Activated B cell treated with CpG ODN at 0.5 μM for 24 hours (primary cell): ENCODE measurements at regions of chr17 and their contacts with region 1.

Region 1: GRCh38 chr17:8248751-8249607 is at the start of gene PFAS:
- DNase-seq: peak; percentile 99
- ATAC-seq: peak; percentile 47
- H3K4me3 Mint-ChIP-seq: peak within 1 kb of the TSS; percentile 99
- H3K27ac Mint-ChIP-seq: peak within 1 kb of the TSS; percentile 99
- H3K4me1 Mint-ChIP-seq: peaks cover 43% of the 10 kb centered on the region
- H3K27me3 Mint-ChIP-seq: no peaks in the 10 kb centered on the region
- CTCF ChIP-seq: no peak
- total RNA-seq, gene PFAS: 121 and 126 TPM in 2 replicates

Region 2: DNA sequence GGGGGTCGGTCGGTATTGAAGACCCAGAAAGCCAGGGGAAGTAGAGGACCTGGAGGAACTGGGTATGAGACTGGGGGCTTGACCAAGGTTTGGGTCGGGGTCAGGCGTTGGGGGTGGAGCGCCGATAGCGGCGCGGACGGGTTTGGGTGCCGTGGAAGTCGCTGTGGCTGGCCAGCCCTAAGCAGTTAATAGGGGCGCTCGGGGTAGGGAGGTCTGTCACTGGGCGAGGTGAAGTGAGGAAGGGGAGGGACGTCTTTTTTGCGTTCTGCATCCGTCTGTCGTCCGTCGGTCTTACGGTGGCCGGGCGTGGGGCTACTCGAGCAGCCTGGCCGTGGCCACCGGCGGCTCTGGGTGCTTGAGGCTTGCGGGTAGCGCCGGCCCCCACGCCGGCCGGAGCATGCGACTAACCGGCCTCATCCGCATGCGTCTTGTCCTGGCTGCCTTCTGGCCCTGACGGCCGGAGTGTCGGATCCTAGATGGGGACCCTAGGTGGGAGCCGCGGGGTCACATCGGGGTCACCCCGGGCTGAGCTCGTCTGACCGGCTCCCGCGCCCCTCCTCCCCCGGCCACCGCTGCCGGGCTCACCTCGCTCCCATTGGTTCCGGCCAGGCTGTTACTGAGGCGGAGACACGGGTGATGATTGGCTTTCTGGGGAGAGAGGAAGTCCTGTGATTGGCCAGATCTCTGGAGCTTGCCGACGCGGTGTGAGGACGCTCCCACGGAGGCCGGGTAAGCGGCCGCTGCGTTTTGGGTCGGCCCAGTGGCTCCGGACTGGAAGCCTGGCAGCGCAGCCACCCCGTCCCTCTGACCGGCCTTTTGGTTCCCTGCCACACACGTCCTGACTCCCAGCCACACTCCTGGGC is 404.5 kb before region 1 on chr17:
- CTCF ChIA-PET with region 1: no interaction called
- POLR2A ChIA-PET with region 1: interaction called, 8 read pairs
- intact Hi-C with region 1: loop called (anchors 1 kb)
- DNase-seq: peak; percentile 83
- ATAC-seq: peak; percentile 46
- H3K4me3 Mint-ChIP-seq: peak overlapping the region; percentile 98
- H3K27ac Mint-ChIP-seq: peak overlapping the region; percentile 100
- H3K4me1 Mint-ChIP-seq: peaks cover 50% of the 10 kb centered on the region
- H3K27me3 Mint-ChIP-seq: no peaks in the 10 kb centered on the region
- CTCF ChIP-seq: no peak

Region 3: DNA sequence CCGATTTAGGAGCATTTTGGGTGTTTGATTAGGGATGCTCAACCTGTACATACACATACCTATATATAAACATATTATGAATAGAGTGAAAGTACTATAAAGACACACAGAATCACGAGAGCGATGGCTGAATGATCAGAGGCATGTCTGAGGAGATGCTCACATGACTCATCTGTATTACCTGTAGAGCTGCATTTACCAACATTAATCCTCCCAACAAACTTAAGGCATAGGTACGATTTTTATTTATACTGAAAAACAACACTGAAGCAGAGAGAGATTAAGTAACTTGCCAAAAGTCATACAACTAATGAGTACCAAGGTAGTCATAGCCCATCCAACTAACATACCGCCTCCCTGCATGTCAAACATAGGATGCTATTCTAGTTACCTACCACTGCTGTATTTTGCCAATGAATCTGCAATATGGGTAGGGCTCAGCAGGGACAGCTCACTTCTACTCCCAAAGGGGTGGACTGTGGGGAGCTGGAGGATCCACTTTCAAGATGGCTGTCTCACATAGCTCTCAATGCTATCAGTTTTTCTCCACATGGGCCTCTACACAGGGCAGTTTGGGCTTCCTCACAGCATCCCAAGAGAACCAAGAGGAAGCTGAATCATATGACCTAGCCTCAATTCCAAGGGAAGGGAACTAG is 383.9 kb before region 1 on chr17:
- CTCF ChIA-PET with region 1: no interaction called
- POLR2A ChIA-PET with region 1: no interaction called
- intact Hi-C with region 1: no loop called
- DNase-seq: no peak
- ATAC-seq: no peak
- H3K4me3 Mint-ChIP-seq: no peak overlapping the region
- H3K27ac Mint-ChIP-seq: no peak overlapping the region
- H3K4me1 Mint-ChIP-seq: peaks cover 14% of the 10 kb centered on the region
- H3K27me3 Mint-ChIP-seq: no peaks in the 10 kb centered on the region
- CTCF ChIP-seq: no peak

Region 4: GRCh38 chr17:8156246-8156992 is 92.6 kb before region 1 on chr17:
- CTCF ChIA-PET with region 1: interaction called, 4 read pairs
- POLR2A ChIA-PET with region 1: interaction called, 46 read pairs
- intact Hi-C with region 1: no loop called
- DNase-seq: peak; percentile 98
- ATAC-seq: peak; percentile 82
- H3K4me3 Mint-ChIP-seq: no peak overlapping the region
- H3K27ac Mint-ChIP-seq: no peak overlapping the region
- H3K4me1 Mint-ChIP-seq: peaks cover 48% of the 10 kb centered on the region
- H3K27me3 Mint-ChIP-seq: no peaks in the 10 kb centered on the region
- CTCF ChIP-seq: no peak

Region 5: DNA sequence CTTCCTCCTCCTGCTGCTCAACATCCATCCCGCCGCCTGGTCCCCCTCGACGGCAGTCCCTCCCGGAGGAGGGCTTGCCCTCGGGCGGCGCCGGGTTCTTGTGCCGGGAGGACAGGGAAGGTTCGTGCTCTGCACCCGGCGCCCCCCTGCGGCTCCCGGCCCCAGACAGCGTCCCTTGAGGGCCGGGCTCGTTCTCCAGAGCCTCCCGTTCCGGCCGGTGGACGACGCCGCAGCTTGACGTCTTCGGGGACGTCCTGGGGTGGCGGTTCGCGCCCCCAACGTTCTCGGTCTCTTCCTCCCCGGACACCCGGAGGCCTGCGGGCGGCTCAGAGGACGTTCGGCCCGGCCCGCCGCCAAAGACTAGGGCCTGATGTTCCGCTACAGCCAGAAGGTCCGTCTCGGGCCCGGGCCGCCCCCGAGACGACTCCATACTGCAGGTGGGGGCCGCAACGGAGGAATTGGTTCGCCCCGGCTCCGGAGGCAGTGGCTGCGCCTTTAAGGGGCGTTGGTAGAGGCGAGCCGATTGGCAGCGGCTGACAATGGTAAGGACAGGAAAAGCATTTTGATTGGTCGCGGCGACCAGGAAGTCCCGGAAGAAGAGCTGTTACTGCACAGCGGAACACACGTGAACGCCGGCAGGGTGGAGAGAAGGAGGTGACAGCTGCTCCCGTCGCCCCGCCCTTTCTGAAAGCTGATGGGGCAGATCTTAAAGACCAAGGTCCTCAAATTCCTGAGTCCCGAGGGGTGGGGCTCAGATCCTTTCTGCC is 59.1 kb before region 1 on chr17 and contains the start of gene BORCS6:
- CTCF ChIA-PET with region 1: interaction called, 3 read pairs
- POLR2A ChIA-PET with region 1: interaction called, 103 read pairs
- intact Hi-C with region 1: loop called (anchors 1 kb)
- DNase-seq: peak; percentile 84
- ATAC-seq: peak; percentile 67
- H3K4me3 Mint-ChIP-seq: no peak within 1 kb of the TSS
- H3K27ac Mint-ChIP-seq: peak within 1 kb of the TSS; percentile 95
- H3K4me1 Mint-ChIP-seq: peaks cover 11% of the 10 kb centered on the region
- H3K27me3 Mint-ChIP-seq: no peaks in the 10 kb centered on the region
- CTCF ChIP-seq: no peak
- total RNA-seq, gene BORCS6: 12.3 and 12.8 TPM in 2 replicates

Region 6: GRCh38 chr17:8231701-8232100 is 17.3 kb before region 1 on chr17:
- CTCF ChIA-PET with region 1: no interaction called
- POLR2A ChIA-PET with region 1: interaction called, 413 read pairs
- intact Hi-C with region 1: loop called (anchors 1 kb)
- DNase-seq: no peak
- ATAC-seq: no peak
- H3K4me3 Mint-ChIP-seq: no peak overlapping the region
- H3K27ac Mint-ChIP-seq: no peak overlapping the region
- H3K4me1 Mint-ChIP-seq: peaks cover 10% of the 10 kb centered on the region
- H3K27me3 Mint-ChIP-seq: no peaks in the 10 kb centered on the region
- CTCF ChIP-seq: no peak

Region 7: DNA sequence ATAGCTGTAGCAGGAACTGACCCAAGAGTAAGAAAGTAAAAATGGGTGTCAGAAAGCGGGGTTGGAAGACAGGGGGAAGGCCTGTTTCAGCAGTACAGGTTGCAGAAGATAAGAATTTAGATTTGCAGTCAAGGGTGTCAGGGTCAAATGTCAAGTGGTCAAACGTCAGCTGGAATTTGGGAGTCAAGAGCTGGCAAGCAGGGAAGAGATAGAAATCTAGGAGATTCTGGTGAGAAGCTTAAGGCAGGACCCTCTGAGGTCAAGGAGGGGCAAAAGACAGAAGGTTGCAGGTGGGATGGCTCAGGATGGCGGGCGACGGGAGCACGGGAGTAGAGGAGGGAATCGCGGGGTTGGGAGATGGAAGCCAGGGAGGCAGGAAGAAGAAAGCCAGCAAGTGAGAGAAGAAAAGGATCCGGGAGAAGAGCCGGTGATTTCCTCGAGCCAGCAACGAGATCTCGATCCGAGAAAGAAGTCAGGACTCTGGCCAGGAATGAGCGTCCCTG is 45.9 kb after region 1 on chr17:
- CTCF ChIA-PET with region 1: interaction called, 3 read pairs
- POLR2A ChIA-PET with region 1: interaction called, 108 read pairs
- intact Hi-C with region 1: loop called (anchors 1 kb)
- DNase-seq: no peak
- ATAC-seq: no peak
- H3K4me3 Mint-ChIP-seq: peak overlapping the region; percentile 92
- H3K27ac Mint-ChIP-seq: peak overlapping the region; percentile 86
- H3K4me1 Mint-ChIP-seq: peaks cover 30% of the 10 kb centered on the region
- H3K27me3 Mint-ChIP-seq: no peaks in the 10 kb centered on the region
- CTCF ChIP-seq: no peak

Region 8: DNA sequence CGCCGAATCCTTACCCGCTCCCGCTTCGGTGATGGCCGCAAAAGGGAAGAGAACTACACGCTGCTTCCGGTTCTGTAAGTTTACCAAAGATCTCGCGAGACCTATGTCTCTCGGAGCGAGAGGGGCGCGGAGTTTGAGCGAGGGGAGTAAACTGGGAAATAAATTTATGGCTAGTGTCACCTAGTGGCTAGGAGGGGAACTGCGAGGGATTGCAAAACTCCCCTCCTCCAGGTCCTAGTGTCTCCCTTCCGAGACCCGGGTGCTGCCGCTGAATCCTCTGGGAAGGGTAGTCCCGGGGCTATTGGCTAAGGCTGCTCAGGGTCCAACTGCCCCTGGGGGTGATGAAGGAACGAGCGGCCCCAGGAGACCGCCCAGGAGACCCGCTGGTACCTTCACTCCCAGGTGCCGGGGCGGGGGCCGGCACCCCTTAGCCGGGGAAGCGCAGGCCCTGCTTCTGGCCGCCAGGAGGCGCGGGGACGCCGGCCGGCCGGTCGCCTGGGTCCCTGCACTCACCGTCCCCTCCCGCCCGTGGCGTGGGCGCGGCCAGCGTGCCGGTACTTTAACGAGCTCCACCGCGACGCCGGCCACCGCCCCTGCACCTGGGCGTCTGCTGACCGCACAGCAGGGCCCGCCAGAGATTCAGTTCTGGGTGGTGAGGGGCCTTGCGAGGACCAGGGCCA is 134.3 kb after region 1 on chr17 and contains the start of gene RPL26:
- CTCF ChIA-PET with region 1: interaction called, 3 read pairs
- POLR2A ChIA-PET with region 1: interaction called, 4 read pairs
- intact Hi-C with region 1: loop called (anchors 2 kb)
- DNase-seq: peak; percentile 94
- ATAC-seq: peak; percentile 90
- H3K4me3 Mint-ChIP-seq: peak within 1 kb of the TSS; percentile 98
- H3K27ac Mint-ChIP-seq: peak within 1 kb of the TSS; percentile 95
- H3K4me1 Mint-ChIP-seq: peaks cover 56% of the 10 kb centered on the region
- H3K27me3 Mint-ChIP-seq: no peaks in the 10 kb centered on the region
- CTCF ChIP-seq: peak; percentile 87
- total RNA-seq, gene RPL26: 3,512 and 4,174 TPM in 2 replicates

Region 9: DNA sequence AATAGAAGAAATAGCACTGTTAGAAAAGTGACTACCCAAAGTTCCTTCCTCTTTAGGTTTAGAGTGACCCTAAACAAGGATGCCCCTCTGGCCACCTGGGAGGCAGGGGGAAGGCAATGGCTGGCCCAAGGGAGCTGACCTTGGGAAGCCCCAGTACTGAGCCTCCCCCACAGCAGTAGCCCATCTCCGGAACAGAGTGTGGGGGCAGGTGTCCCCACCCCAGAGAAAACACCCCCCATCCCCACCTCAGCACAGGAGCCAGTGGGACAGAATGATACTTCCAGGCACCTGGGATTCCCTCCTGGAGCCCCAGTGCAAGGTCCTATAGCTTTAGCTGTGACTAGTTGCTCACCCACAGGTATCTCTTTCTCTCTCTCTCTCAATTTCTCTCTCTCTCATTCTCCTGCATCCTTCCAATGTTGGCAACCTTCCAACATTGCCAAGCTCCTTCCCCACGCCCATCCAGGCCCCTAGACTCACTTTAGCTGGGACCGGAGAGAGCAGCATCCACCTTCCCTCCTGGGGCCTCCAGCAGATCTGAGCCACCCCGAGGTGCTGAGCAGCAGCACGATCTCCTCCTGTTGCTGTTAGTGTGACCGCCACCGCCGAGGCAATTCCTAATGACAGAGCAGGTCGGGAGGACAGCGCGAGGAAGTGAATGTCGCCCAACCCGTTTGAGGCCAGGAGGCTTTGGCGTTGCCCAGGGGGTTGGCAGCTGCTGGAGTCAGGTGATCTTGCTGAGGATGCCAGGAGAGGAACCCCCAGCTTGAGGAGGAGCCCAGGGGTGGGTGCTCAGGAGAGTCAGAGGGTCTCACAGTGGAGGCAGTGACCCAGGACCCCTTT is 148.4 kb after region 1 on chr17 and contains the start of gene RNF222:
- CTCF ChIA-PET with region 1: no interaction called
- POLR2A ChIA-PET with region 1: no interaction called
- intact Hi-C with region 1: no loop called
- DNase-seq: no peak
- ATAC-seq: no peak
- H3K4me3 Mint-ChIP-seq: no peak within 1 kb of the TSS
- H3K27ac Mint-ChIP-seq: no peak within 1 kb of the TSS
- H3K4me1 Mint-ChIP-seq: peaks cover 9% of the 10 kb centered on the region
- H3K27me3 Mint-ChIP-seq: peaks cover 31% of the 10 kb centered on the region
- CTCF ChIP-seq: no peak
- total RNA-seq, gene RNF222: not detected in 2 replicates